Posterior cingulate gyrus (tissue), 11 donors: ENCODE measurements at regions of chr2 and their contacts with region 1.

Region 1: GRCh38 chr2:189798312-189799029 is 14.2 kb downstream of the PMS1 start:
- DNase-seq: no peak

Region 2: GRCh38 chr2:189698020-189698887 is 100.2 kb before region 1 on chr2:
- intact Hi-C with region 1: no loop called
- DNase-seq: peak in 1 of 10 donors; percentile 15

Region 3: GRCh38 chr2:189751080-189751658 is 47.3 kb before region 1 on chr2:
- intact Hi-C with region 1: no loop called
- DNase-seq: no peak

Region 4: GRCh38 chr2:189927823-189928419 is 129.4 kb after region 1 on chr2:
- intact Hi-C with region 1: no loop called
- DNase-seq: no peak

Region 5: DNA sequence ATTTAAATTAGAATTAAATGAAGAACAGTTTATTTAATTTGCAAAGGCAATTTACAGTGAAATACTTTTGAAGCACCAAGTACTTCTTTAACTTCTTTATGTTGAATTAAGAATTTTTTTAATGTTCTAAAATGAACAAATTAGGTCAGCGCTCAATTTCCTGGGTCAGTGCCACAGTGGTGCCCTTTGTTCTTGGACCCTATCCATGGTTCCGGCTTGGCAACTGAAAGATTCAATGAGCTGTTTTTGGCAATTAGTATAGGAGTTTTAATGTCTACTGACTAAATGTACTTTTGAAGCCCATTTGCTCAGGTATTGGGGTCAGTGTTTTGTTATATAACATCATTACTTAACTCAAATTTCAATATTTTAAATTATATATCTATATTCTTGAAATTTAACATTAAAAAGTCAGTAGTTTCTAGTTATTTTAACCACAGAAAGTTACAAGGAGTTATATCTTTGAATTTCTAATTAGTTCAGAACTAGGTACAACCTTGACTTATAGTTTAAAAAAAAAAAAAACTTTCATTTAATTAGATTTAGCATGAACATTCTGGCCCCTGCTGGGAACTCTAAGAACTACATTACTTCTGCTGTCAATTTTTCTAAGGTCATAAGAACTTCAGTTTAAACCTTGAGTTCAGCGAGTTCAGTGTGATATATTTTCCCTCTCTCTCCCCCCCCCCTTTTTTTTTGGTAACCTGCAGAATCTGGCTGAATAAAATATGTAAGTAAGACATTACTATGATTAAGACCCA is 271.6 kb after region 1 on chr2:
- intact Hi-C with region 1: loop called (anchors 5 kb)
- DNase-seq: no peak